ENCODE measurements at regions of chr21 and their contacts with region 1.

Region 1: DNA sequence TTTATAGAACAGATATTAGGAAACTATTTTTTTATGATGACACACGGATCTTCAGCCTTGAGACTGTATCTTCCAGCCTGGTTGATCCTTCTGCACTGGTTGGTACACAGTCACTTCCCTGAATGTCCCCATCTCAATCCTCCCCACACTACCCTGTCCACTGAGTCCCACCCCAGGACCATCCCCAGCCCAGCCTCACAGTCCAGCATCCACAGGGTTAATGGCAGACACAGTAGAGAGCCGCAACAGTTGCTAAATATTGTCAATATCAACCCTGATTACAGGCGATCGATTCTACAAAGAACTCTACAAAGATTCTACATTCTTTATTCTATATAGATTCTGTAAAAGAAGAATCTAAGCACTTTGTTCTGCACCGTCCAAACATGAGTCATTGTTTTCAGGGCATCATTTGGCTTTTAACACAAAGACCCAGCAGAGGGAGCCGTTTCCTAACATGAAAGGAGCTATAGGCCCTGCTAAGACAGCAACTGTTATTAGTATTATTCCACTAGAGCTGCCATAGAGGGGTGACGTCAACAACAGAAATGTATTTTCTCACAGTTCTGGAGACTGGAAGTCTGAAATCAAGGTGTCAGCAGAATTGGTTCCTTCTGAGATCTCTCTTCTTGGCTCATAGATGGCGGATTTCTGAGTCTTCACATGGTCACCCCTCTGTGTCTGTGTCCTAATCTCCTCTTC is 30.1 kb upstream of the IFNAR2 start:
- DNase-seq: peak; percentile 95
- H3K4me3 ChIP-seq: no peak overlapping the region
- H3K27ac ChIP-seq: peak overlapping the region; percentile 16 to 65 (median 29)
- H3K4me1 ChIP-seq: peaks cover 28 to 46% (median 37%) of the 10 kb centered on the region in 4 donors
- H3K27me3 ChIP-seq: no peaks in the 10 kb centered on the region
- CTCF ChIP-seq: peak; percentile 67 to 84 (median 82)
- EP300 ChIP-seq: no peak
- POLR2A ChIP-seq: no peak

Region 2: GRCh38 chr21:32834916-32835235 is 364.8 kb before region 1 on chr21:
- intact Hi-C with region 1: loop called (anchors 2 kb)
- DNase-seq: peak; percentile 86
- H3K4me3 ChIP-seq: no peak overlapping the region
- H3K27ac ChIP-seq: no peak overlapping the region
- H3K4me1 ChIP-seq: peaks cover 0 to 3% (median 0%) of the 10 kb centered on the region in 4 donors
- H3K27me3 ChIP-seq: peaks cover 0 to under 1% (median 0%) of the 10 kb centered on the region in 4 donors
- CTCF ChIP-seq: no peak
- EP300 ChIP-seq: no peak
- POLR2A ChIP-seq: no peak

Region 3: DNA sequence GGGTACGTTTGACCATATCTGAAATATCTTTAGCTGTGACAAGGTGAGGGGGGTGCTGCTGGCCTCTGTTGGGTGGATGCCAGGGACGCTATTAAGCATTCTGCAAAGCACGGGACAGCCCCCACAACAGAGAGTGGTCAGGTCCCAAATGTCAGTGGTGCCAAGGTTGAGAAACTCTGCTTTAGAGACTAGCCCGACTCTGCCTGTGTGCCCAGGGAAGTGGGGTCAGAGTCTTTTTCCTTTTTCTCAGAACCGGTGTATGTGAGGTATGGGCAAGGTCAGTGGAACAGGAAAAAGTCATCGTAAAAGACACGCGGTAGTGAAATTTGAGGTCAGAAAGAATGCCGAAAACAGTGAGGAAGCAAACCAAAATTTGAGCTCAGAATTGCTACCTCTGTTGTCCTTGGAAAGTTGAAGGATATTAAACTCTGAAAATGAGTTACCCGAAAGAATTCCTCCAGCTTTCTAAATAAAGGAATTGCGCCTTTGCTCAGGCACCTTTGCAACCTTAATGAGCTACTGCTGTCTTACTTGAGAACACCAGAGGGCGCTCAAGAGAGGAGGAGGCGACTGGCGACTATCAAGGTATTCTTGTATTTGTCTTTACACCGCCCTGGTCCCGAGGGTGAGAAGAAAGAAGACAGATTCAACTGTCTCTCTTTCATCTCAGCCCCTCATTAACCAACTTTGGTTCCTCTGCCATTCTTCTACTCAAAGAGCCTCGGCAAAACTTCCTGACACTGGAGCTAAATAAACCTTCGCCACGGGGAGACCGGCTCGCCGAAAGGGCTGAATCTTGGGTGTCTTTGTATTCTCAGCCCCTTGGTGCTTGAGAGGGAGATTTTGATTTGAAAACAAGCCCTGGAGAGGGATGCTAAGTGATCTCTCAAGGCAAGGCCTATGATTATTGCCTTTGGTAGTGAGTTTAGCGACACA is 259.3 kb before region 1 on chr21:
- intact Hi-C with region 1: loop called (anchors 5 kb)
- DNase-seq: no peak
- H3K4me3 ChIP-seq: no peak overlapping the region
- H3K27ac ChIP-seq: no peak overlapping the region
- H3K4me1 ChIP-seq: no peaks in the 10 kb centered on the region
- H3K27me3 ChIP-seq: peaks cover 0 to 23% (median 0%) of the 10 kb centered on the region in 4 donors
- CTCF ChIP-seq: peak; percentile 36 to 65 (median 49)
- EP300 ChIP-seq: no peak
- POLR2A ChIP-seq: no peak

Region 4: GRCh38 chr21:33266050-33266788 is 66.6 kb after region 1 on chr21 and contains the start of gene IL10RB:
- intact Hi-C with region 1: loop called (anchors 5 kb)
- DNase-seq: peak; percentile 94
- H3K4me3 ChIP-seq: peak within 1 kb of the TSS; percentile 80 to 89 (median 84)
- H3K27ac ChIP-seq: peak within 1 kb of the TSS; percentile 82 to 91 (median 86)
- H3K4me1 ChIP-seq: peaks cover 10 to 24% (median 23%) of the 10 kb centered on the region in 4 donors
- H3K27me3 ChIP-seq: no peaks in the 10 kb centered on the region
- CTCF ChIP-seq: no peak
- EP300 ChIP-seq: peak; percentile 10
- POLR2A ChIP-seq: peak; percentile 20
- total RNA-seq, gene IL10RB: 16.9 to 31.0 (median 20.6) TPM

Region 5: DNA sequence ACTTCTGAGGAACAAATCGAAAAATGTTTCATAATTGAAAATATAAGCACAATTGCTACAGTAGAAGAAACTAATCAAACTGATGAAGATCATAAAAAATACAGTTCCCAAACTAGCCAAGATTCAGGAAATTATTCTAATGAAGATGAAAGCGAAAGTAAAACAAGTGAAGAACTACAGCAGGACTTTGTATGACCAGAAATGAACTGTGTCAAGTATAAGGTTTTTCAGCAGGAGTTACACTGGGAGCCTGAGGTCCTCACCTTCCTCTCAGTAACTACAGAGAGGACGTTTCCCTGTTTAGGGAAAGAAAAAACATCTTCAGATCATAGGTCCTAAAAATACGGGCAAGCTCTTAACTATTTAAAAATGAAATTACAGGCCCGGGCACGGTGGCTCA is 155.7 kb after region 1 on chr21:
- intact Hi-C with region 1: loop called (anchors 5 kb)
- DNase-seq: no peak
- H3K4me3 ChIP-seq: no peak overlapping the region
- H3K27ac ChIP-seq: no peak overlapping the region
- H3K4me1 ChIP-seq: peaks cover 0 to 4% (median 4%) of the 10 kb centered on the region in 4 donors
- H3K27me3 ChIP-seq: no peaks in the 10 kb centered on the region
- CTCF ChIP-seq: no peak
- EP300 ChIP-seq: no peak
- POLR2A ChIP-seq: no peak

Region 6: GRCh38 chr21:33374450-33375096 is 174.9 kb after region 1 on chr21:
- intact Hi-C with region 1: loop called (anchors 5 kb)
- DNase-seq: no peak
- H3K4me3 ChIP-seq: no peak overlapping the region
- H3K27ac ChIP-seq: peak overlapping the region in 1 of 4 donors; percentile 40
- H3K4me1 ChIP-seq: peaks cover 2 to 12% (median 3%) of the 10 kb centered on the region in 4 donors
- H3K27me3 ChIP-seq: no peaks in the 10 kb centered on the region
- CTCF ChIP-seq: peak; percentile 45 to 53 (median 52)
- EP300 ChIP-seq: no peak
- POLR2A ChIP-seq: no peak

Region 7: GRCh38 chr21:33386222-33386784 is 186.6 kb after region 1 on chr21:
- intact Hi-C with region 1: no loop called
- DNase-seq: no peak
- H3K4me3 ChIP-seq: no peak overlapping the region
- H3K27ac ChIP-seq: no peak overlapping the region
- H3K4me1 ChIP-seq: peaks cover 13 to 30% (median 22%) of the 10 kb centered on the region in 4 donors
- H3K27me3 ChIP-seq: no peaks in the 10 kb centered on the region
- CTCF ChIP-seq: no peak
- EP300 ChIP-seq: no peak
- POLR2A ChIP-seq: no peak

Region 8: DNA sequence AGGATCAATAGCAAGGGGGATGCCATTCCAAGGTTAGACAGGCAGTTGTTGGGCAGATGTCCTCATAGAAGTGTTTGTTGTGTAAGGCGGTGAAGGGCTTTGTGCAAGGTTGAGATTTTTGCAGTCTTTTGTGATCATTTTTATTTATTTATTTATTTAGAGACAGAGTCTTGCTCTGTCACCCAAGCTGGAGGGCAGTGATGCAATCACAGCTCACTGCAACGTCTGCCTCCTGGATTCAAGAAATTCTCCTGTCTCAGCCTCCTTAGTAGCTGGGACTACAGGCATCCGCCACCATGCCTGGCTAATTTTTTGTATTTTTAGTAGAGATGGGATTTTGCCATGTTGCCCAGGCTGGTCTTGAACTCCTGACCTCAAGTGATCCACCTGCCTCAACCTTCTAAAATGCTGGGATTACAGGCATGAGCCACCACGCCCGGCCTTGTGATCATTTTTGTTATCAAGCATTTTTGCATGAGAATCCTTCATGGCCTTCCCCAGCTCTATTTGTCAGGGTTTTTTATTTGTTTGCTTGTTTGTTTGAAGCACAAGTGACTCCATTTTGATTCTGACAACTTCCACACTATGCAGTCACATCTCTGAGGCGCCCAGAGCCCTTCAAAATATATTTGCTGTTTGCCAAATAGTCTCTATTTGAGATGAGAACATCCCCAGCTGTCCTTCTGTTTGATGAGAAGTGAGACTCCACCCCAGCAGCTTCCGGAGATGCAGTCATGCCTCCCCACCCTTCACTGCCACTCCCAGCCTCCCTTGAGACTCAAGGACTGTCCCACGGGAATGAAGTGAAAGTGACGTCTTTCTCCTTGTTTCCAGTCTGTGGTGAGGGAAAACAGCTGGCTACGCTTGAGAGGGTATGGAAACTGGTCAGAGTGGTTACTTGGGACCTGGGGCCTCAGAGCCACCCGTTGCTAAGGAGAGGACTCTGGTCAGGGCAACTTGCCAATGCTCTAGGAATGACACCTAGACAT is 242.1 kb after region 1 on chr21:
- intact Hi-C with region 1: loop called (anchors 2 kb)
- DNase-seq: no peak
- H3K4me3 ChIP-seq: no peak overlapping the region
- H3K27ac ChIP-seq: peak overlapping the region; percentile 45 to 62 (median 50)
- H3K4me1 ChIP-seq: peaks cover 11 to 25% (median 18%) of the 10 kb centered on the region in 4 donors
- H3K27me3 ChIP-seq: no peaks in the 10 kb centered on the region
- CTCF ChIP-seq: no peak
- EP300 ChIP-seq: no peak
- POLR2A ChIP-seq: no peak

Measured in esophagus muscularis mucosa (tissue), 4 donors.